Activated B cell treated with CpG ODN at 0.5 μM for 24 hours (primary cell): ENCODE measurements at regions of chr10 and their contacts with region 1.

Region 1: DNA sequence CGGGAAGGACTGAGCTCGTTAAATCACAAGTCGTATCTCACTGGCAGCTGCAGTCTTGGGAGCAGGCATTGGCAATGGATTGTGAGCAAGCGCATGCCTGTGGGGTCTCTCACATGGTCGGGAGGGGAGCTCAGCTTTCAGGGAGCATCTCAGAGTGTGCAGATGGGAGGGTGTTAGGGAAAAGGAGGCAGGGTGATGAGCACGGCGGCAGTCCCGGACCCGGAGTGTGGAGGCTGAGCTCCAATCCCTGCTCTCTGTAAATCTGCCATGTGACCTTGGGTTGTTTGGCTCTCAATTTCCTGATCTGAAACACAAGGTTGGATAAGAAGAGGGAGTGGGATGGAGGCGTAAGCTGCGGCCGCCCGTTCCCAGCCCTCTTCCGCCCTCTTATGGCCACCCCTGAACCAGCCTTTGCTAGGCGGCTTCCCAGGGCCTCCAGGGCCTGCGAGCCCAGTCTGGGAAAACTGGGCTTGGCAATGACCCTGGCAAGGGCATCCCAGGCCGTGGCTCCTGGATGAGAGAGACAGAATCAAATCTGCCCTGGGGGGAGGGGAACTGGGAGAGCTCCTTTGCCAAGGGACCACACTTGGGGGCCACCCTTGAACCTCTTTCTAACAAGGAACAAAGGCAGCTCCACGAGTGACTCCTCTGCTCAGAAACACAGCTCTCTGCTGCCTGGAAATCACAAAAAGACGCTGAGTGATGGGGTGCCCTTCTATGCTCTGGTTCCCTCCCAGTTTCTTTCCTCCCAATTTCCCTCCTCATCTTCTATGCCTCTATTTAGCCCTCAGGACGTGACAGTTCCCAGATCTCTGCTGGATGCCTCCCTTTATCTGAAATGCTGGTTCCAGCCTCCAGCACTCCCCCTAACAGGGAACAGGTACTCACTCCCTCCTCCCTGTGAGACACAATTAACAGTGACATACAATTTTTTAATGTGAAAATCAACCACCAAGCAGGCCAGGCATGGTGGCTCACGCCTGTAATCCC is 41.7 kb upstream of the LOXL4 start:
- DNase-seq: no peak
- ATAC-seq: no peak
- H3K4me3 Mint-ChIP-seq: peak overlapping the region; percentile 39
- H3K27ac Mint-ChIP-seq: no peak overlapping the region
- H3K4me1 Mint-ChIP-seq: peaks cover 7% of the 10 kb centered on the region
- H3K27me3 Mint-ChIP-seq: peaks cover 27% of the 10 kb centered on the region
- CTCF ChIP-seq: no peak

Region 2: GRCh38 chr10:97792141-97792721 is 517.4 kb before region 1 on chr10:
- CTCF ChIA-PET with region 1: no interaction called
- POLR2A ChIA-PET with region 1: no interaction called
- intact Hi-C with region 1: loop called (anchors 5 kb)
- DNase-seq: peak; percentile 47
- ATAC-seq: no peak
- H3K4me3 Mint-ChIP-seq: no peak overlapping the region
- H3K27ac Mint-ChIP-seq: no peak overlapping the region
- H3K4me1 Mint-ChIP-seq: peaks cover 5% of the 10 kb centered on the region
- H3K27me3 Mint-ChIP-seq: peaks cover 22% of the 10 kb centered on the region
- CTCF ChIP-seq: peak; percentile 43

Region 3: DNA sequence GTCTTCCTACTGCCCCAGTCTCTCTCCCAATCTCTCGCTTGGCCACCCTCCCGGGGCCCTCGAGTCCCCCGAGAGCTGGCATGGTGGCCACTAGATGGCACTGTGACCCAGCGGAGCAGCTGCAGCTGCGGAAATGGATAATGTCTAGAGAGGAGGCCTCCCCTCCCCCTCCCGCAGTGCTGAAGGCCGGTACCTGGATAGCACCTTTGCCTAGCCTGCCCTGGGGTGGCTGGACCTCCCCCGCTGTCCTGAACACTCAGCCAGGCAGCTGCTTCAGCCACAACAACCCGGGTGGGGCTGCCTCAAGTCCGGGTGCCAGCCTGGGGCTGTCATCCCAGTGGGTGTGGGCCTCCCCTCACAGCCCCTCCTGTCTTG is 394.8 kb before region 1 on chr10:
- CTCF ChIA-PET with region 1: interaction called, 3 read pairs
- POLR2A ChIA-PET with region 1: no interaction called
- intact Hi-C with region 1: loop called (anchors 2 kb)
- DNase-seq: peak; percentile 44
- ATAC-seq: peak; percentile 73
- H3K4me3 Mint-ChIP-seq: no peak overlapping the region
- H3K27ac Mint-ChIP-seq: no peak overlapping the region
- H3K4me1 Mint-ChIP-seq: no peaks in the 10 kb centered on the region
- H3K27me3 Mint-ChIP-seq: peaks cover 19% of the 10 kb centered on the region
- CTCF ChIP-seq: no peak

Region 4: DNA sequence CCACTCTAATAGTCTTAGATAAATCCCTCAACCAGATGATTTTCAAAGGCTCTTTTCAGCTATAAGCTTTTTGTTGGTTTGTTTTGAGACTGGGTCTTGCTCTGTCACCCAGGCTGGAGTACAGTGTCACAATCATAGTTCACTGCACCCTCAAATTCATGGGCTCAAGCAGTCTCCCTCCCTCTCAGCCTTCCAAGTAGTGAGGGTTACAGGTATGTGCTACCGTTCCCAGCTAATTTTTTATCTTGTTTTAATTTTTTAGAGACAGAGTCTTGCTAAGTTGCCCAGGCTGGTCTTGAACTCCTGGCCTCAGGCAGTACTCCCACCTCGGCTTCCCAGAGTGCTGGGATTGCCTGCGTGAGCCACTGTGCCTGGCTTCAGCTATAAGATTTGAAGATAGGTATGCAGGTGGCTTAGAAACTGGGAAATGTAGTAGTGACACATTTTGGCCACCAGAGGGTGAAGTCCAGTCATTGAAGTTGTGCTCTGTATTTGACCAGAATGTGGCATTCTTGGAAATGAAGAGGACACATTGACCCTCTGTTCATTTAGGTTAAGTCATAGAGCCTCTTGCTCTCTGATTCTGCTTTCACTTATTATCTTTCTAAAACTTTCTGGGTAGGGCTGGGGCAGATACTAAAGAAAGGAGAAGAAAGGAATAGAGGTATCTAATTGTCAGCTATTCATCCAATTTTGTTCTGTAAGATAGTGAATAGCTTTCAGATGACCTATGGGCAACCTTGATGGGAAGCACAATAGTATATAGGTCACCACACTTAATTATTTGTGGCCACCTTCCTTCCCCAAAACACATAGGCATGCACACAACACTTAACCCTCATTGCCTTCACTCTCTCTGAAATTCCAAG is 139.2 kb before region 1 on chr10:
- CTCF ChIA-PET with region 1: interaction called, 4 read pairs
- POLR2A ChIA-PET with region 1: no interaction called
- intact Hi-C with region 1: loop called (anchors 1 kb)
- DNase-seq: no peak
- ATAC-seq: peak; percentile 58
- H3K4me3 Mint-ChIP-seq: no peak overlapping the region
- H3K27ac Mint-ChIP-seq: no peak overlapping the region
- H3K4me1 Mint-ChIP-seq: peaks cover 39% of the 10 kb centered on the region
- H3K27me3 Mint-ChIP-seq: no peaks in the 10 kb centered on the region
- CTCF ChIP-seq: peak; percentile 82

Region 5: GRCh38 chr10:98295907-98296306 is 13.8 kb before region 1 on chr10:
- CTCF ChIA-PET with region 1: no interaction called
- POLR2A ChIA-PET with region 1: no interaction called
- intact Hi-C with region 1: no loop called
- DNase-seq: no peak
- ATAC-seq: no peak
- H3K4me3 Mint-ChIP-seq: no peak overlapping the region
- H3K27ac Mint-ChIP-seq: no peak overlapping the region
- H3K4me1 Mint-ChIP-seq: peaks cover 7% of the 10 kb centered on the region
- H3K27me3 Mint-ChIP-seq: peaks cover 25% of the 10 kb centered on the region
- CTCF ChIP-seq: no peak

Region 6: GRCh38 chr10:98623176-98623575 is 313.5 kb after region 1 on chr10:
- CTCF ChIA-PET with region 1: no interaction called
- POLR2A ChIA-PET with region 1: no interaction called
- intact Hi-C with region 1: no loop called
- DNase-seq: no peak
- ATAC-seq: no peak
- H3K4me3 Mint-ChIP-seq: no peak overlapping the region
- H3K27ac Mint-ChIP-seq: no peak overlapping the region
- H3K4me1 Mint-ChIP-seq: no peaks in the 10 kb centered on the region
- H3K27me3 Mint-ChIP-seq: peaks cover 2% of the 10 kb centered on the region
- CTCF ChIP-seq: no peak

Region 7: GRCh38 chr10:98673171-98673782 is 363.6 kb after region 1 on chr10:
- CTCF ChIA-PET with region 1: no interaction called
- POLR2A ChIA-PET with region 1: no interaction called
- intact Hi-C with region 1: no loop called
- DNase-seq: no peak
- ATAC-seq: no peak
- H3K4me3 Mint-ChIP-seq: no peak overlapping the region
- H3K27ac Mint-ChIP-seq: no peak overlapping the region
- H3K4me1 Mint-ChIP-seq: no peaks in the 10 kb centered on the region
- H3K27me3 Mint-ChIP-seq: peaks cover 11% of the 10 kb centered on the region
- CTCF ChIP-seq: no peak